ENCODE measurements at regions of chr12 and their contacts with region 1.

Region 1: GRCh38 chr12:3313675-3314663 is 177.0 kb upstream of the PRMT8 start:
- DNase-seq: peak in 1 of 2 experiments; percentile 66
- H3K4me3 ChIP-seq: no peak overlapping the region
- H3K4me3 Mint-ChIP-seq: no peak overlapping the region
- H3K27ac Mint-ChIP-seq: no peak overlapping the region
- H3K4me1 ChIP-seq: peaks cover 17% of the 10 kb centered on the region
- H3K4me1 Mint-ChIP-seq: peaks cover 20% of the 10 kb centered on the region
- H3K27me3 ChIP-seq: no peaks in the 10 kb centered on the region
- H3K27me3 Mint-ChIP-seq: peaks cover 13% of the 10 kb centered on the region
- CTCF ChIP-seq: peak in 1 of 2 experiments; percentile 78

Region 2: DNA sequence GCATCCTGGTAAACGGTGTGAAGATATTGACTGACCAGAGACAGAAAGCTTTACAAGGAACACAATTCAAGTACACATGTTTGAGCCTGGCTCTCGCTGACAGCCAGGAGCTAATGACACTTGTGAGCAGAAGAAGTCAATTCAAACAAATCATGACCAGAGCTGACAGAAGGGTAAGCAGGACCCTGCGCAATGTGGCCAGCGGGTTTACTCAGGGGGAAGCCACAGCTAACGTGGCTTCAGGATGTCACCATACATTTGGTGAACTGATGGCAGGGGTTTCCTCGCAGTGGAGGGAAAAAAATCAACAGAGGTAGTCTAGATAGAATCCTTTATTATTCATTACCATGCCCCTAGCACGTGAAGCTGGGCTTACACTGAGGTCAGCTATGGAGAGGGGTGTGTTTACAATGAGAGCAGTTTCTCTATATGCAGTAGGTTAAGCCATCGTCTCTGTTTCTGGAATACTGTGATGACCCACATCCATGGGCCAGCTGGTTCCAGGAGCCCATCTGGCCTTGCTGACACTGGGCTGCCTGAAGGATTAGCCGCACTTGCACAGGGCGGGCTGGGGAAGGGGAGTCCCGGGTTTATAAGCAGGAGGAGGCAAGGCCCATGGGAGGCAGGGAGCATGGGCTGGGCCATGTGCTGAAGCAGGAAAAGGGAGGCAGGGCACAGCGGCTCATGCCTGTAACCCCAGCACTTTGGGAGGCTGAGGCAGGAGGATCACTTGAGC is 21.1 kb before region 1 on chr12:
- CTCF ChIA-PET with region 1: interaction called, 11 read pairs
- POLR2A ChIA-PET with region 1: no interaction called
- intact Hi-C with region 1: no loop called
- DNase-seq: no peak
- H3K4me3 ChIP-seq: no peak overlapping the region
- H3K4me3 Mint-ChIP-seq: no peak overlapping the region
- H3K27ac Mint-ChIP-seq: no peak overlapping the region
- H3K4me1 ChIP-seq: no peaks in the 10 kb centered on the region
- H3K4me1 Mint-ChIP-seq: no peaks in the 10 kb centered on the region
- H3K27me3 ChIP-seq: no peaks in the 10 kb centered on the region
- H3K27me3 Mint-ChIP-seq: peaks cover 10% of the 10 kb centered on the region
- CTCF ChIP-seq: no peak

Region 3: GRCh38 chr12:3333583-3333982 is 19.6 kb after region 1 on chr12:
- CTCF ChIA-PET with region 1: interaction called, 7 read pairs
- POLR2A ChIA-PET with region 1: no interaction called
- intact Hi-C with region 1: loop called (anchors 2 kb)
- DNase-seq: peak; percentile 77 to 79
- H3K4me3 ChIP-seq: no peak overlapping the region
- H3K4me3 Mint-ChIP-seq: no peak overlapping the region
- H3K27ac Mint-ChIP-seq: no peak overlapping the region
- H3K4me1 ChIP-seq: no peaks in the 10 kb centered on the region
- H3K4me1 Mint-ChIP-seq: peaks cover 7% of the 10 kb centered on the region
- H3K27me3 ChIP-seq: peaks cover 2% of the 10 kb centered on the region; the same call in 1 of the 2 replicates
- H3K27me3 Mint-ChIP-seq: peaks cover 25% of the 10 kb centered on the region
- CTCF ChIP-seq: peak in 1 of 2 experiments; percentile 34

Region 4: DNA sequence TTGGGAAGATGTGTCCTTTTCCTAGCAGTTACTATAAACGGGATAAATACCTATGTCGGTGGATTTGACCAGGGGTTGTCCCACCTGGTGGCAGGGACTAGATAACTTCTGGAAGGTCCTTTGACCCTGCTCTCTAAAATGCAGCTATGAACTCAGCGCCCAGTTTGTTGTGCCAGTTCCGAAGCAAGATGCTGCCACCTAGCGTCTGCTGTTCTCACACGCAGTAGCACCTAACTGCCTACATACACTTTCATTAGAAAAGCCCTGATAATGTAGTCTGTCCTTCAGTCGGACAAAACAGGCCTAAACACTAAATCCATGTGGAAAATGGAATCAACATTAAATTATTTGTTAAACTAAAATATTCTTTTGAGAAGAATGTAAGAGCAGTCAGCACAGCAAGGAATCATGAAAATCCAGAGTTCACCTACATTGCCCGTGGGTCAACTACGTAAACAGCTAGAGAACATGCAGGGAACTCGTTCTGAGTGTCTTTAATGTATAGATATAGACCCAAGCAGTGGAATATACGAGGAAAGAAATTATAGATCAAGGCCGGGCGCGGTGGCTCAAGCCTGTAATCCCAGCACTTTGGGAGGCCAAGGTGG is 490.0 kb after region 1 on chr12:
- CTCF ChIA-PET with region 1: interaction called, 11 read pairs
- POLR2A ChIA-PET with region 1: no interaction called
- intact Hi-C with region 1: no loop called
- DNase-seq: peak; percentile 80
- H3K4me3 ChIP-seq: no peak overlapping the region
- H3K4me3 Mint-ChIP-seq: no peak overlapping the region
- H3K27ac Mint-ChIP-seq: no peak overlapping the region
- H3K4me1 ChIP-seq: no peaks in the 10 kb centered on the region
- H3K4me1 Mint-ChIP-seq: no peaks in the 10 kb centered on the region
- H3K27me3 ChIP-seq: no peaks in the 10 kb centered on the region
- H3K27me3 Mint-ChIP-seq: no peaks in the 10 kb centered on the region
- CTCF ChIP-seq: peak; percentile 95 to 98